Posterior cingulate gyrus (tissue), 11 donors: ENCODE measurements at regions of chr4 and their contacts with region 1.

Region 1: GRCh38 chr4:138510053-138510452 is 267.9 kb upstream of the SLC7A11 start:
- DNase-seq: no peak

Region 2: DNA sequence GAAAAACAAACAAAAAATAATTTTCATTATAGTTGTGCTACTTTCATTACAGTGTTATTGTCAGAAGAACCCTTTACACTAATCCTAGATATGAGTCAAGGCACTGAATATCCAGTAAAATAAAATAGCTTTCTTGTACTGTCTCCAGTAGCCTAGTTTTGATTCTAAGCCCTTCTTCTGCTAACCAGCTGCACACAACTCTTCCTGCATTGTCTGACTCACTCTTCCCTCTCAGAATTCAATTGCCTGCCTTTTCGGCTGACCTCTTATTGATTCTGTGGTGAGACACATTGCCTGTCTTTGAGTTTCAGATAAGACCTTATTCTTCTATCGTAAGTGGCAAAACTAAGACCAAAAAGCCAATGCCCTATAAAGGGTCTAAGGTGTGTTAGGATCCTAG is 951.1 kb before region 1 on chr4:
- intact Hi-C with region 1: no loop called
- DNase-seq: no peak

Region 3: DNA sequence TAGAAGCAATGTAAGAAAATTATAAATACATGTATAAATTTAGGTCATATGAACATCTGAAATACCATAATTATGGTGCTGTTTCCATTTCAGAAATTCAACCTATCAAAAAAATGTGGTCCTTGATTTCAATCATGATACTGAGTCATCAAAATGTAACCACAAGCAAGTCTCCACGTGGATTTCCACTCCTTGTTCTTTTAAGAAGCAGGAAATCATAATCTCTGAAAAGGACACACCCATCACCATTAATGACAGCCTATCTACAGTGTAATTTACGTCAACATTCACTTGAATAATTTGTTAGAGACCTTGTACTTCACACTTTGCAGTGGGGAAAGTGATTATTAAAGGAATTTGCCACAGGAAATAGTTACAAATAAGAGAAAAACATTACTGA is 250.3 kb before region 1 on chr4:
- intact Hi-C with region 1: no loop called
- DNase-seq: no peak

Region 4: GRCh38 chr4:138588501-138588900 is 78.4 kb after region 1 on chr4:
- intact Hi-C with region 1: loop called (anchors 2 kb)
- DNase-seq: no peak

Region 5: DNA sequence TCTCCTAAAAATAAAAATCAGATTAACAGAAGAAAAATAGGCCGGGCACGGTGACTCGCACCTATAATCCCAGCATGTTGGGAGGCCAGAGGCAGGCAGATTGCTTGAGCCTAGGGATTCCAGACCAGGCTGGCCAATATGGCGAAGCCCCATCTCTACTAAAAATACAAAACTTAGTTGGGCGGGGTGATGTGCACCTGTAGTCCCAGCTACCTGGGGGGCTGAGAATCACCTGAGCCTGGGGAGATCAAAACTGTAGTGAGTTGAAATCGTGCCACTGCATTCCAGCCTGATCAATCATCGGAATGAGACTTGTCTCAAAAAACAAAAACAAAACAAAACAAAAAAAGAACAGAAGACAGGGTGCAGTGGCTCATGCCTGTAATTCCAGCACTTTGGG is 472.7 kb after region 1 on chr4:
- intact Hi-C with region 1: no loop called
- DNase-seq: no peak